ENCODE measurements at regions of chr4 and their contacts with region 1.

Region 1: DNA sequence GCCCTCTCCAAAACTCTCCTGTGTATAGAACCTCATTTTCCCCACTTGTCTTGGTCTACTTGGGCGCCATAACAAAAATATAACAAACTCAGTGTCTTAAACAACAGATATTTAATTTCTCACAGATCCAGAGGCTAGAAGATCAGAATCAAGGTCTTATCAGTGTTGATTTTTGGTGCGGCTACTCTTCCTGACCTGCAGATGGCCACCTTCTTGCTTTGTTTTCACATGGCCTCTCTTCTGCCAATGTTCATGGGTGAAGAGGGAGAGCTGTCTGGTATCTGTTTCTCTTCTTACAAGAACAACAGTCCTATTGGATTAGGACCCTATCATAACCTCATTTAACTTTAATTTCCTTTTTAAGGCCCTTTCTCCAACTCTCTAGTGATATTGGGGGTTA is 177.3 kb downstream of the PABPC4L start:
- DNase-seq: no peak
- ATAC-seq: peak; percentile 78
- H3K4me3 ChIP-seq: no peak overlapping the region
- H3K27ac ChIP-seq: no peak overlapping the region
- H3K4me1 ChIP-seq: no peaks in the 10 kb centered on the region
- H3K27me3 ChIP-seq: no peaks in the 10 kb centered on the region
- CTCF ChIP-seq: peak in 1 of 3 experiments; percentile 33; a peak in 2 of 6 replicates
- EP300 ChIP-seq: no peak
- POLR2A ChIP-seq: no peak
- RAD21 ChIP-seq: peak; percentile 9; the same call in 1 of the 2 replicates

Region 2: DNA sequence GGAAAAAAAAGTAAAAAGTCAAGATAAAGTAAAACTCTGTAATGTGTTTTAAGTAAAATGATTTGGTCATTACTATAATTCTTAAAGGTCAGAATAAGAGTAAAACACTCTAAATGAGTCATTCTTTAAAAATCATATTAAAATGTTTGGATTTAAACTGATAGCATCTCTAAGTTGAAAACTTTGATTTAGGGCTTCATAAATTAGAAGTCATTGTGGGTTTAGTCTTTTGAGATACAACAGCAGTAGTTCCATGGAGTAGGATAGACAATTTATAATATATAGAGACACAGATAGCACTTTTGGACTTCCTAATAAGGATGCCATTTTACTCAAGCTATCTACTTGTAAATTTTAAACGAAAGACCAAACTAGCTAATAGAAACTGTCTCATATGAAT is 254.4 kb after region 1 on chr4:
- CTCF ChIA-PET with region 1: no interaction called
- POLR2A ChIA-PET with region 1: no interaction called
- RAD21 ChIA-PET with region 1: no interaction called
- SMC1A ChIA-PET with region 1: no interaction called
- in situ Hi-C with region 1: no loop called
- intact Hi-C with region 1: no loop called
- DNase-seq: no peak
- ATAC-seq: no peak
- H3K4me3 ChIP-seq: no peak overlapping the region
- H3K27ac ChIP-seq: no peak overlapping the region
- H3K4me1 ChIP-seq: no peaks in the 10 kb centered on the region
- H3K27me3 ChIP-seq: no peaks in the 10 kb centered on the region
- CTCF ChIP-seq: no peak
- EP300 ChIP-seq: no peak
- POLR2A ChIP-seq: no peak
- RAD21 ChIP-seq: no peak

Region 3: DNA sequence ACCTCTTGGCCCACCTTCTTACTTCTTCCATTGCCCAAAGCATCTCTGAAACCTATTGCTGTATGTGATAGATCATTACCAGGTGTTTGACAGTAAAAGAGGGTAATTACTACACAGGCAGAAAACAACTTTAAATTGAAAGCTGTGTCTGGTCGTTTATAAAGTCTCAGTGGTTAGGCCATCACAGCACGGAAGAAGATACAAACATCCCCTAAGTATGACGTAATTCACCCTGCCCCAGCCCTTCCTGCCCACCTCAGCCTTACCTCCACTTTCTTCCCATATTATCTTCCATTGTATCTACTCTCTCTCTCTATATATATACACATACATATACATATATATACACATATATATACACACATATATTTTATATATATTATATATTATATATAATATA is 983.1 kb after region 1 on chr4:
- CTCF ChIA-PET with region 1: no interaction called
- POLR2A ChIA-PET with region 1: no interaction called
- RAD21 ChIA-PET with region 1: no interaction called
- SMC1A ChIA-PET with region 1: no interaction called
- in situ Hi-C with region 1: no loop called
- intact Hi-C with region 1: loop called (anchors 5 kb)
- DNase-seq: no peak
- ATAC-seq: peak; percentile 66
- H3K4me3 ChIP-seq: no peak overlapping the region
- H3K27ac ChIP-seq: no peak overlapping the region
- H3K4me1 ChIP-seq: no peaks in the 10 kb centered on the region
- H3K27me3 ChIP-seq: no peaks in the 10 kb centered on the region
- CTCF ChIP-seq: no peak
- EP300 ChIP-seq: no peak
- POLR2A ChIP-seq: no peak
- RAD21 ChIP-seq: no peak